ENCODE measurements at regions of chr16 and their contacts with region 1.

Region 1: DNA sequence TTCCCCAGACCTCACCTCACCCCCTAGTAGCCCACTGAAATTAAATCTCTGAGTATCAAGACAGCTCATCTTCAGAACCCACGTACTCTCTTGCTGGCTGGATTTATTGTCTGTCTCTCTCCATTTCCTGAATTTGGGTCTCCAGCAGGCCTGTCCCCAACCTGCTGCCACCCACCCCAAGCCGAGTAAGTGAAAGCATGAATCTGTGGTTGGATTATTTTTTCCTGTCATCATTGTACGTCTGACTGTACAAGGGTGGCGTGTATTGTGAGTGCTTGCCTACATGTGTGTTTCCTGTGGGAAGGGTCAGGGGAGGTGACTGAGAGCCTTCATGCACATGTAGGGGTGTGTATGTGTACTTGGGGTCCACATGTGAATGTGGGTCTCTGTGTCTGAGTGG is 5.4 kb downstream of the TNP2 start:
- DNase-seq: peak; percentile 83
- H3K4me3 Mint-ChIP-seq: peak overlapping the region; percentile 24
- H3K27ac Mint-ChIP-seq: peak overlapping the region; percentile 86
- H3K4me1 Mint-ChIP-seq: peaks cover 32% of the 10 kb centered on the region
- H3K27me3 Mint-ChIP-seq: no peaks in the 10 kb centered on the region

Region 2: DNA sequence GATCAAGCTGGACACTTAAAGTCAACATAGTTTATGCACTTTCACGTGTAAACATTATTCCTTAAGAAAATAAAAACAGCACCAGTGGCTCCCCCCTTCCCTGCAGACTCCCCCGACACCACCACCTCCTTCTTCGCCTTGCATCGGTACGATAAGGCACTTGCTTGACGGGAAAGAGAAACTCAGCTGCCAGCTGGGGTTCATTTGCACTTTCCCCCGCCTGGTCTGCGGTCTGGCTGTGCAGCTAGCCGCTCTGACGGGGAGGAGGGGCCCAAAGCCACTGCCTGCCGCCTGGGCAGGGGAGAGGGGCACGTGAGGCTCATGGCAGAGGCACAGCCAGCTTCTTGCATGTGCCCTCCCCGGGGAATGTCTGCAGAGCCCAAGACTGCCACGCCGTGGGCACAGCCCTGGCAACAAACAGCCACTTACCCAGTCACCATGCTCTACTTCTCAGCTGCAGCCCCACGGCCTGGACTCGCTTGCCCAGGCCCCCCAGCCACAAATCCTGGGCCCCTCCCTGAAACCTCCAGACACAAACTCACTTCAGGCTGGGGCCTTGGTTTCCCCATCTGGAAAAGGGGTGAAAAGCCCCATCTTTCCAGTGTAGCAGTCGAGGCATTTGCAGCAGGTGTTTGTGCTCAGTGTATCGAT is 33.9 kb after region 1 on chr16:
- CTCF ChIA-PET with region 1: interaction called, 4 read pairs
- POLR2A ChIA-PET with region 1: interaction called, 4 read pairs
- intact Hi-C with region 1: loop called (anchors 5 kb)
- DNase-seq: peak; percentile 82
- H3K4me3 Mint-ChIP-seq: peak overlapping the region; percentile 49
- H3K27ac Mint-ChIP-seq: peak overlapping the region; percentile 49
- H3K4me1 Mint-ChIP-seq: peaks cover 18% of the 10 kb centered on the region
- H3K27me3 Mint-ChIP-seq: peaks cover 6% of the 10 kb centered on the region

Measured in activated CD4-positive, alpha-beta memory T cell treated with anti-CD3 and anti-CD28 coated beads for 36 hours (primary cell).